Ascending aorta (tissue), 2 donors: ENCODE measurements at regions of chr9 and their contacts with region 1.

Region 1: GRCh38 chr9:122996586-122996985 is 36.9 kb upstream of the GPR21 start:
- DNase-seq: no peak
- H3K4me3 ChIP-seq: no peak overlapping the region
- H3K27ac ChIP-seq: no peak overlapping the region
- H3K4me1 ChIP-seq: peaks cover 0 to 9% of the 10 kb centered on the region in 2 donors
- H3K27me3 ChIP-seq: no peaks in the 10 kb centered on the region
- CTCF ChIP-seq: no peak

Region 2: DNA sequence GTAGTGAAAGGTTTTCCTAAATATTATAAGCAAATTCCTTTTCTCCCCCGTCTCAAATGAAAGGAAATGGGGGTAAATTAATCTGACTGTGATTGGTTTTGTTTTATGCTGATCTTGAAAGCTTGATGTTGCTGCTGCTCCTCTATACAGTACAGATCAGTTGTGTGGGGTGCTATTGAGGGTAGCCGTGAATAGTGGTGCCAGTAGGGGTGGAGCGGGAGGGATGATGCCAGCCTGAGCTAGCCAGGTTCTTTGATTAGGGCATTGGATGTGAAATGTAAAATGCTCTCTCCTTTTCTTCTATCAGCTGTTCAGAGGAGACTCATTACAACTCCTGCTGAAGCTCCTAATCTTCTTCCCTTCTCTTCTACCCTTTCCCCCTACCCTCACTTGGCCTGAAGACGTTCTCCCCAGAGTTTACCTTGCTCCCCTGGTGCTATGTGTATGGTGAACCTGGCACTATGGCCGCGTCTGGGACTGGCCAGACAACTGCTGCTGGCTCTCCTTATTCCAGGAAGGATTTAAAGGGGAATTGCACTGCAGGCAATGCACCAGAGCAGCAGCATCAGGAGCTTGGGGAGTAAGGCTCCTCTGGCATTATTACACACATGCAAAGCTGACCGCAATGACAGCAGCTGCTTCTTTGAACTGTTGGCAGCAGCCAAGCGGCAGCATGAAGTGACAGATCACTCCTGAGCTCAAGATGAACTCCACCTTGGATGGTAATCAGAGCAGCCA is 37.4 kb after region 1 on chr9:
- intact Hi-C with region 1: loop called (anchors 5 kb)
- DNase-seq: no peak
- H3K4me3 ChIP-seq: peak overlapping the region; percentile 40 to 56
- H3K27ac ChIP-seq: peak overlapping the region; percentile 82 to 86
- H3K4me1 ChIP-seq: peaks cover 0 to 37% of the 10 kb centered on the region in 2 donors
- H3K27me3 ChIP-seq: no peaks in the 10 kb centered on the region
- CTCF ChIP-seq: no peak

Region 3: DNA sequence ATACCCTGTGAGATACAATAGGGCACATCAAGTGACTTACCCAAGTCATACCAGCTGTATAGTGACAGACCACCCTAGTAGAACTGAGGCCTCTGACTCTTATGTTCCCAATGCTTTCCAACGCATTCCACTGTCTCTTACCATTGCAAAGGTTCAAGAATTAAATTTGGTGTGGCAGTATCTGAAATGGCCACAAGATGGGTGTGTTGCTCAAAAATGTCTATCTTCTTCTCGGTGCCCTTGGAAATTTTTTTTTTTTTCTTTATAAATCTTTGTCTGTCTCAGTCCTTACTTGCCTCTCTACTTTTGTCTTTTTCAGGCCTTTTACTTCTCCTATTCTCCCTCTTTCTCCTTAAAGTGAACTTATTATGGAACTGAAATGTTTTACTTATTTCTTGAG is 85.2 kb after region 1 on chr9:
- intact Hi-C with region 1: no loop called
- DNase-seq: no peak
- H3K4me3 ChIP-seq: no peak overlapping the region
- H3K27ac ChIP-seq: no peak overlapping the region
- H3K4me1 ChIP-seq: no peaks in the 10 kb centered on the region
- H3K27me3 ChIP-seq: no peaks in the 10 kb centered on the region
- CTCF ChIP-seq: peak; percentile 21 to 58 (median 48)